ENCODE measurements at regions of chr9 and their contacts with region 1.

Region 1: DNA sequence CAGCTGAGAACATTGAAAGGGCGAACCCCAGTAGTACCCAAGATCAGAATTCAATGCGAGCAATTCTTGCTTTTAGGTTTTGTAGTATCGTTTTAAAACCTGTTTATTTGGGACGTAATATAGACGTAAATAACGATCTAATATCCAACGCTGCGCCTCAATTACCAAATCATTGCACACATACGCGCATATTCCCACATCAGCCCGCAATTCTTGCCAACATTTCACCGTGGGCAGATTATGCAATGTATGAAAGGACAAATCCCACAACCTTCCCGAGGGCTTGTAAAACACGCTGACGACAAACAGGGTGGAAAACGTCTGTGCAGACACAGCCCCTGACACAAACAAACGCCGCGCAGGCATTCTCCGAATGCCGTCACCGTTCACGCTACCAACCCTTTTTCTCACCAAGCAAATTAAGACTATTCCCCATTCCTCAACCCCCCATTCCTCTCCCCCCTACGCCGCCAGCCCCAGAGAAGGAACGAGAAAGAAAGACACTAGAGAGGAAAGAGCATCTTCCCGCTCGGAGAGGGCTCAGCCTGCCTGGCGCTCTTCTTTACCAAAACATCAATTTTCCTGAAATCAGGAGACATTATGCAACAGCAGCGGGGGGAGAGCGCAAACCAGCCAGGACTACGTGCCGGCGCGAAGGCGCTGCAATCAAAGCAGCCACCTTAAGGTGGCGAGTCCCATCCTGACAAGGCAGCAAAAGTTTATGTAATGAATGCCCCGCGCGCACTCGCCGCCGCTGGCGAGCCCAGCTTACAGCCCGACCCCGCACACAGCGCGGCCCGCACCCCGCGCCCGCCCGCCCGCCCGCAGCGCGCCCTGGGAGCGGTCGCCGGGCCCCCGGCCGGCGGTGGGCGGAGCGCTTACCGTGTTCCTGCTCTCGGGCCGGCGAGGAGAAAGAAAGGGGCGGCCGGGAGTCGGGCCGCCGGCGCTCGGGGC is 597 bp downstream of the NFIL3 start:
- DNase-seq: peak; percentile 83
- ATAC-seq: peak; percentile 8
- H3K4me3 Mint-ChIP-seq: peak overlapping the region; percentile 98
- H3K27ac Mint-ChIP-seq: peak overlapping the region; percentile 95
- H3K4me1 Mint-ChIP-seq: peaks cover 55% of the 10 kb centered on the region
- H3K27me3 Mint-ChIP-seq: no peaks in the 10 kb centered on the region

Region 2: DNA sequence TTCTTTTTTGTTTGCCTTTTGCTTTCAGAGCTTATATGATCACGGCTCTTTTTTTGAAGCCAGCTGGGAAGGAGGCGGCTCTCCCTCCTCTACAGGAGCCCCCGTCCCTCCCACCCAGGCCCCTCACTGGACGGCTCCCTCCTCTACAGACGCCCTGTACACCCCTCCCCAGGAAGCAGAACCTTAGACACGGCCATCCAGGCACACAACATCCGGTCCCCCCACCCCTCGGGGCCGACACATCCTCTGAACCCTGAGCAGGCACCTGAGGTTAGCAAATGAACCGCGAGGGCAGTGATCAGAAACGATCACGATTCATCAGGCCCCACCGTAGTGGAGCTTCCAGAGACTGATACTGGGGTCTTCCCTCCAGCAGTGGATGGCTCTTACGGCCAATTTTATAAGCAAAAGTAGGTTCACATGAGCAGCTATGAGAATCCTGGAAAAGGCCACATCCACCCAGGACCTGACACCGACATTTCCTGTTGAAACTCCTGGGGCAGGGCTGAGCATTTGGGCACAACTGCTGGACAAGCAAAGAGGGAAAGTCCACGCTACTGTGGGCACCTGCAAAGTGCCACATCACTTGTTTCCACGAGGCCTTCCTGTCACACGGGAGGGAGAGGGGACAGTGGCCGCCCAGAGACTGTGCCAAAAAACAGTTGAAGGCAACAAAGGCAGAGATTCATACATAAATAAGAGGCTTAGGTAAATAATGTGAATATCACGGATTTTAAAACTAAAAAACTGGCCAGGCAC is 2004.0 kb before region 1 on chr9:
- CTCF ChIA-PET with region 1: no interaction called
- POLR2A ChIA-PET with region 1: no interaction called
- intact Hi-C with region 1: loop called in 1 of 2 experiments (anchors 5 kb)
- DNase-seq: peak; percentile 85
- ATAC-seq: peak; percentile 22
- H3K4me3 Mint-ChIP-seq: peak overlapping the region; percentile 74
- H3K27ac Mint-ChIP-seq: peak overlapping the region; percentile 88
- H3K4me1 Mint-ChIP-seq: peaks cover 93% of the 10 kb centered on the region
- H3K27me3 Mint-ChIP-seq: no peaks in the 10 kb centered on the region

Region 3: DNA sequence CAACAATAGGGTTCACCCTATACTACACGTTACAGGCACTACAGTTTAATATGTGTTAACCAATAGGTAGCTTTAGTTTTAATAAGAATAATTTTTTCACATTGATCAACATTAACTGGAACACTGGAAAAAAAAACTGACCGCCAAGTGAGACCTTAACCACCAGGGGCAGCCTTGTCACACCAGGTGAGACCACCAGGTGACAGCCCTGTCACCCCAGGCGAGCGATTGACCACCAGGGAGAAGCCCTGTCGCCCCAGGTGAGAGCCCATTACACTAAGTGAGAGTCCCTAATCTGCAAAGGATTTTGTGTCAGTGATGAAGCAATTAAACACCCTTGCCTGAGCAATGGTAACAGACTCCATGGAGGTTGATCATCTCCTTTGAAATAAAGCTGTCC is 696.8 kb before region 1 on chr9:
- CTCF ChIA-PET with region 1: no interaction called
- POLR2A ChIA-PET with region 1: no interaction called
- intact Hi-C with region 1: no loop called
- DNase-seq: no peak
- ATAC-seq: no peak
- H3K4me3 Mint-ChIP-seq: no peak overlapping the region
- H3K27ac Mint-ChIP-seq: no peak overlapping the region
- H3K4me1 Mint-ChIP-seq: no peaks in the 10 kb centered on the region
- H3K27me3 Mint-ChIP-seq: peaks cover 4% of the 10 kb centered on the region

Region 4: DNA sequence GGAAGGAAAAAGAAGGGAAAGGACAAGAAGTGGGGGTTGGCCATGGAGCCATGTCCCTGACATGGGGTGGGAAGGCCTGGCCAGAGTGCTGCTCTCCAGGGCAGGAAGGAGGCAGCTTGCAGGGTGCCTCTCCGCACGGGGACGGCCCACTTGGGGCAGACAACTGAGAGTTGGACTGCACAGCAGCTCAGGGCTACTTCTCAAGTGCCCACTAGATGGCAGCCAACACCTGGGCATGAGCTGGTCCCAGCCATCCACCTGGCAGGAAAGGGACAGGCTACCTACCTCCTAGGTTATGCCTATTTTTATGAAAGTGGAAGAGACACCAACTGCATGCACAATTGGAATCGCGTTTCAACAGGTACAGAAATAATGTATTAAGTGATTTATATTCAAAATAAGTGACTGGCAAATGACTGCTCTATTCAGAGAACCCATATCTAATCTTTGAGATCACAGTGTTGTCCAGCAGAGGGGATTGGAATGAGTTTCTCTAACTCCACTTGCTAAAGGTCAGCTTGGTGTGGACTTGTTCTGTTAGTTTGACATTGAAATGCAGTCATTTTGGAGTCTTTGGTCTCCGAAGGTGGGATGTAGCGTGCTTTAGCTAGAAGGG is 508.1 kb before region 1 on chr9:
- CTCF ChIA-PET with region 1: interaction called, 17 read pairs
- POLR2A ChIA-PET with region 1: interaction called, 7 read pairs
- intact Hi-C with region 1: loop called (anchors 1 kb)
- DNase-seq: peak; percentile 89
- ATAC-seq: peak; percentile 98
- H3K4me3 Mint-ChIP-seq: no peak overlapping the region
- H3K27ac Mint-ChIP-seq: no peak overlapping the region
- H3K4me1 Mint-ChIP-seq: no peaks in the 10 kb centered on the region
- H3K27me3 Mint-ChIP-seq: no peaks in the 10 kb centered on the region

Region 5: DNA sequence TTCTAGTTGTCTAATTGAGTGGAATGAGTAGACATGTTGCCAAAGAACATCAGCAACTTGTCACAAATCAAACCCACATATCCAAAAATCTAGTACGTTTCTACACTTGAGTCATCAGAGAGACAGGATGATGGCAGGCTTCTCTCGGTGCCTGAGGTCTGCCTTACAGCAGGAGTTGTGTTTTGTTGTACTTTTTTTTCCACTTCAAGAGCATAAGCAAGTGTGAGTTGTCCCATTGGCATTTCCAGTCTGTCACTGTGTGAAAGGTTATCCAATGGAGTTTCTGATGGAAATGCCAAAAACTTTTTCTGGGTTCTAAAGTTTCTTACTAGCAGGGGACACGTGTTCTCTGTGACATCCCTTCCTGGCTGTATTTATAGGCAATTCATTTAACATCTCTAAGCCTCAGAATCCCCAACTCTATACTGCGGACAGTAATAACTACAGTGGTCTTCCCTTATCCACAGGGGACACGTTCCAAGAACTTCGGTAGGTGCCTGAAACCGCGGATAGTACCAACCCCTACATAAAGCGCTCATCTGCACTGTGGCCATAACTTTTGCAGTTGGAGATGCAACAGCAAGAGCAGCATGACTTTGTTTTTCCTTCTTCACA is 374.9 kb before region 1 on chr9:
- CTCF ChIA-PET with region 1: interaction called, 4 read pairs
- POLR2A ChIA-PET with region 1: interaction called, 8 read pairs
- intact Hi-C with region 1: loop called (anchors 2 kb)
- DNase-seq: peak; percentile 75
- ATAC-seq: peak; percentile 83
- H3K4me3 Mint-ChIP-seq: peak overlapping the region; percentile 46
- H3K27ac Mint-ChIP-seq: peak overlapping the region; percentile 96
- H3K4me1 Mint-ChIP-seq: peaks cover 82% of the 10 kb centered on the region
- H3K27me3 Mint-ChIP-seq: peaks cover 23% of the 10 kb centered on the region

Region 6: GRCh38 chr9:91131433-91131839 is 291.6 kb before region 1 on chr9:
- CTCF ChIA-PET with region 1: no interaction called
- POLR2A ChIA-PET with region 1: no interaction called
- intact Hi-C with region 1: loop called in 1 of 2 experiments (anchors 5 kb)
- DNase-seq: peak; percentile 91
- ATAC-seq: peak; percentile 98
- H3K4me3 Mint-ChIP-seq: peak overlapping the region; percentile 3
- H3K27ac Mint-ChIP-seq: peak overlapping the region; percentile 94
- H3K4me1 Mint-ChIP-seq: peaks cover 29% of the 10 kb centered on the region
- H3K27me3 Mint-ChIP-seq: no peaks in the 10 kb centered on the region

Region 7: DNA sequence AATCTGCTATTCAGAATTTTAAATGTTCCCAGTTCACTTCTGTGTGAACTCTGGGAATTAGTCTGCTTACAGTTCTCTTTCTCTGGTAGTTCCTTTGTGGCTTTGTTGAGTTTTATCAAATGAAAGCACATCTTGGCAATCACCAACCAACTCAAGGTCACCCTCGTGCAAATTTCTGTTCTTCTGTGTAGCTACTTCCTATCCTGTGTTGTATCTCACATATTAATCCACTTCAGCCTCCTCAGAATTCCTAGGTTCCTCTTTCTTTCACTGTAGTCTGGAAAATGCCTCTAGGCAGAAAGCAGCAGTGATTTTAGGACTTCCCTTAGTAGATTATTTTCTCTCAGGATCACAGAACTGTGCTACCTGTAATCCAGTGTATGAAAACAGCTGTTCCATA is 161.6 kb before region 1 on chr9:
- CTCF ChIA-PET with region 1: no interaction called
- POLR2A ChIA-PET with region 1: no interaction called
- intact Hi-C with region 1: loop called in 1 of 2 experiments (anchors 5 kb)
- DNase-seq: no peak
- ATAC-seq: no peak
- H3K4me3 Mint-ChIP-seq: no peak overlapping the region
- H3K27ac Mint-ChIP-seq: peak overlapping the region; percentile 52
- H3K4me1 Mint-ChIP-seq: peaks cover 30% of the 10 kb centered on the region
- H3K27me3 Mint-ChIP-seq: no peaks in the 10 kb centered on the region

Region 8: GRCh38 chr9:91433180-91433579 is 10.1 kb after region 1 on chr9:
- CTCF ChIA-PET with region 1: interaction called, 10 read pairs
- POLR2A ChIA-PET with region 1: no interaction called
- intact Hi-C with region 1: no loop called
- DNase-seq: peak; percentile 34
- ATAC-seq: peak; percentile 99
- H3K4me3 Mint-ChIP-seq: no peak overlapping the region
- H3K27ac Mint-ChIP-seq: no peak overlapping the region
- H3K4me1 Mint-ChIP-seq: peaks cover 10% of the 10 kb centered on the region
- H3K27me3 Mint-ChIP-seq: peaks cover 21% of the 10 kb centered on the region

Measured in activated CD4-positive, alpha-beta T cell treated with anti-CD3 and anti-CD28 coated beads for 36 hours (primary cell).